Aorta (tissue), 5 donors: ENCODE measurements at regions of chr13 and their contacts with region 1.

Region 1: DNA sequence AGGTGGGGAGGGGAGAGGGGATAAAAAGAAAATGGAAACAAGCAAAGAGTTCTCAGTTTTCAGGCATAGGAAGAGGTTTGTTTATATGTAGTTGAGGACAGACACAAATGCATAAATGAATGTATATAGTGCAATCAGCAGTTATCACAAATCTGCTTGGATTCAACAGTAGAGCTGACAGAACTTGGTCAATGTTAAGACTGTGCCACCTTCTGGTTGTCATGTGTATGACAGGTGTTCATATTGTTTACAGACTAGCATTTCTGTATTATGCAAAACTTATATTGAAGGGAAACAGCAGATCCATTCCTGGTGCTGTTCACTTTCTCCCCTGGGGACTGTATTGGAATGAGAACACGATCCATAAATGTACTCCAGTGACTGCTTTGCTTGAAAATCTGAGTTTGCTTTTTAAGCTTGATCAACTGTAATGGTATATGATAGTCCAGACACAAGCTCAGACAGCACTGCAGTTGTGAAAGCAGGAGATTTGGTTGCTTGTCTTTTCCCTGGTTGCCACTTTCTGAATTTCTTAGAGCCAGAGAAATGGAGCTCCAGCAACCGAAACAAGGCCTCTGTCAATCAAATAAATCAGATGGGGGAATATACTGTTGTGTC is 319.5 kb upstream of the OBI1 start:
- DNase-seq: no peak
- ATAC-seq: peak; percentile 61
- H3K4me3 ChIP-seq: no peak overlapping the region
- H3K27ac ChIP-seq: no peak overlapping the region
- H3K4me1 ChIP-seq: no peaks in the 10 kb centered on the region
- H3K27me3 ChIP-seq: no peaks in the 10 kb centered on the region

Region 2: GRCh38 chr13:78137404-78138142 is 840.9 kb before region 1 on chr13:
- intact Hi-C with region 1: loop called (anchors 5 kb)
- DNase-seq: no peak
- ATAC-seq: peak; percentile 74
- H3K4me3 ChIP-seq: no peak overlapping the region
- H3K27ac ChIP-seq: no peak overlapping the region
- H3K4me1 ChIP-seq: no peaks in the 10 kb centered on the region
- H3K27me3 ChIP-seq: peaks cover 0 to 1% of the 10 kb centered on the region in 2 donors

Region 3: DNA sequence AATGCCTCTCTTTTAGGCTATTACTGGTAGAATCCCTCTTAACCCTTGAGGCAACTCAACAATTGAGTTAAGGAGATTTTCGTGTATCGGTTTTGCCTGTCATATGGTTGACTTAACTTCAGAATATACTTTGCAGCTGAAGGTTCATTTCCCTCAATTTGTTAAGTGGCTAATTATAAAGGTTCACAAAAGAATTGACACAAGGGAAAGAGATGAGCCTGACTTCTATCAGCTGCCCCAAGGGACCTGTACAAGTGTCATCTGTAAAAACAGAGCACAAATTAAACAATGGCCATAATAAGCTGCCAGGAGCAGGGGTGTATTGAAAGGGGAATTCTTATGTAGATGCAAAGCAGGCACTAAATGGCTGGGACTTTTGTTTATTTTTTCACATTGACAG is 15.3 kb after region 1 on chr13:
- intact Hi-C with region 1: loop called in 1 of 2 experiments (anchors 1 kb)
- DNase-seq: no peak
- ATAC-seq: no peak
- H3K4me3 ChIP-seq: no peak overlapping the region
- H3K27ac ChIP-seq: no peak overlapping the region
- H3K4me1 ChIP-seq: no peaks in the 10 kb centered on the region
- H3K27me3 ChIP-seq: peaks cover 0 to 1% of the 10 kb centered on the region in 2 donors